GM13976 (cell line): ENCODE measurements at regions of chr6 and their contacts with region 1.

Region 1: GRCh38 chr6:31267651-31268368 is 4.1 kb downstream of the HLA-C start:
- DNase-seq: no peak
- CTCF ChIP-seq: no peak

Region 2: DNA sequence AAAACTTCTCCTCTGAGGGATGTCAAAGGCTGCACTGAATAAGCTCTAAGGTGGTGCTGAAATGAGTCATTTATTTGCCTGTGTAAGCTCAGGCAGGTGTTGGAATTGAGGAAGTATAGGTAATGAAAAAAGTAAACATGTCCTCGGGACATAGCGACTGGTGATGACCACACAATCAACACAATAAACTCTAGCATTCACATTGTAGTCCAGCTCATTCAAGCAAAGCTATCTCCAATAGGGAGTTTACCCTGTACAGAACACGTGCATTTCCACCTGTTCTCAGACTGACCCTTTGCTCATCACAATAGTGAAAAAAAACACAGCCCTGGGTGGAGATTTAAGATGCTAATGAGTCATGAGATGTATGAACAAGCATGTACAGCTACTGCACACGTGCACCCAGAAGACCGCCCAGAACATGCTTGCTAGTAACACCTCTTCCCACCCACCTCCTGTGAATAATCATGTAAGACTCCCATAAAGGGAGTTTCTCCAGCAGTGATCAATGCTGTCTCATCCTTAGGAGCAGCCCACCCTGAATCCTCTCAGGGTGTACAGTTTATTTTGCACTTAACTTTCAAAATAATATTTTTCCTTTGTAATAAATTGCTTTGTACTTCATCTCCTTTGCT is 64.3 kb before region 1 on chr6:
- in situ Hi-C with region 1: no loop called
- DNase-seq: peak; percentile 34
- CTCF ChIP-seq: no peak

Region 3: DNA sequence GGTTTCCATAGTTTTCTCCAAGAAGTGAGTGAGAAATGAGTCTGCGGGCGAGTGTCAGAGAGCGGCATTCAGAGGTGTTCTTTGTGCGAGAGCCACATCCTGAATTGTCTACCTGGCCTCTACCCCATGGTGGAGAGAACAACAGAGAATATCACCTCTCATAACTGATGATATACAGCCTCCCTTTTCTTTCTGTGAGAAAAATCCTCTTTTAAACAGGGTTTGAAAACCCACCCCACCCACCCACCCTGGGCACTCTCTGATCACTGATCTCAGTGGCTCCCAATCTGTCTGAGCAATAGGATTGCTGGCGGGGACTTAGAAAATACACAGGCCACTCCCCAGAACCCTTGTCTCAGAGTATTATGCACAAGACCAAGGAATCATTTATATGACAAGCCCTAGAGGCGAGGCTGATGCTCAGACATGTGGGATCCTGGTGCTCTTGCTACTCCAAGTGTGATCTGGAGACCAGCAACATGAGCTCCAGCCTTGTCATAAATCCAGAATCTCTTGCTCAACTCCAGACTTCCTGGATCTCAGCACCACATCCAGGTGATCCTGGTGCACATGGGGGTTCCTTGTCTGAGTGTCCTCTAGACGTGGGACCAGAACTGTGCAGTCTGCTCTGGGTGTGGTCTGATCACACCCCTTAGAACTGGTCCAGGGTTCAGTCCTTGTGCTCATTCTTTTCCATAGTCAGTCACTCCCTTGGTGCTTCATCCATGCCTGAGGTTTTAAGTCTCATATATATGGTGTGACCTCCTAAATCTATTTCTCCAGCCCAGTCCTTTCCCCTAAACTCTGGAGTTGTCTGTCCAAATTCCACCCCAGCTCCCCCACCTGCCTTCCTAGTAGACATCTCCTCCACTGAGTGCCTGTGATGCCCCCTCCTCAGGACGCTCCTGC is 83.8 kb after region 1 on chr6:
- in situ Hi-C with region 1: loop called (anchors 5 kb)
- DNase-seq: no peak
- CTCF ChIP-seq: no peak